Activated T-helper 1 cell treated with anti-CD3 and anti-CD28 coated beads, Interleukin-12 subunit alpha, Interleukin-12 subunit beta, Interleukin-2, Interleukin-4 antibody, amounts not matched to agents 30 ng/mL and 10 ng/mL and 1 ng/mL, durations not matched to agents 14 hours and 24 hours and 36 hours (primary cell): ENCODE measurements at regions of chr5 and their contacts with region 1.

Region 1: GRCh38 chr5:131899692-131900091 is 45.8 kb downstream of the MEIKIN start:
- DNase-seq: no peak
- H3K4me3 Mint-ChIP-seq: no peak overlapping the region
- H3K27ac Mint-ChIP-seq: no peak overlapping the region
- H3K4me1 Mint-ChIP-seq: peaks cover 16% of the 10 kb centered on the region
- H3K27me3 Mint-ChIP-seq: peaks cover 7% of the 10 kb centered on the region

Region 2: GRCh38 chr5:131846536-131846935 is 53.2 kb before region 1 on chr5:
- intact Hi-C with region 1: loop called (anchors 5 kb)
- DNase-seq: no peak
- H3K4me3 Mint-ChIP-seq: no peak overlapping the region
- H3K27ac Mint-ChIP-seq: no peak overlapping the region
- H3K4me1 Mint-ChIP-seq: no peaks in the 10 kb centered on the region
- H3K27me3 Mint-ChIP-seq: peaks cover 7% of the 10 kb centered on the region

Region 3: GRCh38 chr5:131877873-131878272 is 21.8 kb before region 1 on chr5:
- intact Hi-C with region 1: no loop called
- DNase-seq: no peak
- H3K4me3 Mint-ChIP-seq: no peak overlapping the region
- H3K27ac Mint-ChIP-seq: no peak overlapping the region
- H3K4me1 Mint-ChIP-seq: no peaks in the 10 kb centered on the region
- H3K27me3 Mint-ChIP-seq: peaks cover 2% of the 10 kb centered on the region

Region 4: DNA sequence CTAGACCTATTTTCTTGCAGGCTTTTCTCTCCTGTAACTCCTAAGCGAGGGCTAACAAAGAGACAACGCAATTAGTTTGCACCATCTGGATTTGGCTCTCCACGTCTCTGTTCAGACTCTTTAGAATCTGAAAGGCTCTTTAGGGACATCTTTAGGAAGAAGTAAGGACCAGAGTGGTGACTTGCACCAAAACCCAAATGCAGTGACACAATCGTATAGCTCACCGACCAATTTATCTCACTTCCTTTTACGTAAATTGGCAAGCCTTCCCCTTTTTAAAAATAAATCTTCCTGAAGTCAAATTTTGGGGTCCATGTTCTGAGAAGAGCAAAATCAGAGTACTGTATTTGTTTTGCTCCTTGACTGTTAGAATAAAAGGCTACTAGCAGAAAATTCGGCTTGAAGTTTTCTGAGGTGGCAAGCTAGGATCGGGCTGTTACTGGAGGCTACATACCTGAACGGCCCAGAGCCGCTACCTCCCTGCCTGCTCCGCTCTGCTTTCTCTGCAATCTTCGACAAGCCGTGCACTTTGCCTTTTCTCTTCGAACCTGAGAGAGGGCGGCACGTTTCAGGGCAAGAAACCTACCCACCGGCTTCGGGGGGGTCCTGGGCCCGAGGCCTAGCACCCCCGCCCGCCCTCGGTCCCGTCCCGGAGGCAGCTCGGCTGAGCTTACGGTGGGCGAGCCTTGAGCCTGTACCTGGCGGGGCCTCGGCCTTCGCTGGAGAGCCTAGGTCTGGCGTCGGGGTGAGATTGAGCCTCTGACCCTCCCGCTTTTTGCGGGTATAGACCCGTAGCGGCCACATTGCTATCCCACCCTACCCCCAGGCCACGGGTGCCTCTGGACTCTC is 45.2 kb after region 1 on chr5:
- intact Hi-C with region 1: no loop called
- DNase-seq: no peak
- H3K4me3 Mint-ChIP-seq: no peak overlapping the region
- H3K27ac Mint-ChIP-seq: no peak overlapping the region
- H3K4me1 Mint-ChIP-seq: no peaks in the 10 kb centered on the region
- H3K27me3 Mint-ChIP-seq: peaks cover 11% of the 10 kb centered on the region